Stomach (tissue), 19 donors: ENCODE measurements at regions of chr12 and their contacts with region 1.

Region 1: DNA sequence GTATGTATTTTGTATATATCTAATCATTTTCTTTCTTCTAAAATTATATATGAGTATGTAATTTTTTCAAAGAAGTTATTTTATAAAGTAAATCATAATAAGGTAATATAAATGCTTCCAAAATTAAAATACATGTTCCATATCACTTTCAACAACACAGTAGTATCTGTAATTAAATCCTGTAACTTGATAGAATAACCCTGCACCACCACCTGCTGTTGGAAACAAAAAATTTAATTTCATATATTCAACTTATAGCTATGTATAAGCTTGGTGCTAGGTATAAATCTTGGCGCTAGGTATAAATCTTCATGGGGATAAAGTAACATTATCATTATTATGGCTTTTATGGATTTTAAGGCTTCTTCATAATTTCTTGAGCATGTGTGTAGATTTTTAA is 149.7 kb upstream of the DCN start:
- DNase-seq: peak in 1 of 2 donors; percentile 57
- H3K4me3 ChIP-seq: no peak overlapping the region
- H3K27ac ChIP-seq: no peak overlapping the region
- H3K4me1 ChIP-seq: no peaks in the 10 kb centered on the region
- H3K27me3 ChIP-seq: no peaks in the 10 kb centered on the region
- CTCF ChIP-seq: no peak
- EP300 ChIP-seq: no peak
- POLR2A ChIP-seq: no peak

Region 2: DNA sequence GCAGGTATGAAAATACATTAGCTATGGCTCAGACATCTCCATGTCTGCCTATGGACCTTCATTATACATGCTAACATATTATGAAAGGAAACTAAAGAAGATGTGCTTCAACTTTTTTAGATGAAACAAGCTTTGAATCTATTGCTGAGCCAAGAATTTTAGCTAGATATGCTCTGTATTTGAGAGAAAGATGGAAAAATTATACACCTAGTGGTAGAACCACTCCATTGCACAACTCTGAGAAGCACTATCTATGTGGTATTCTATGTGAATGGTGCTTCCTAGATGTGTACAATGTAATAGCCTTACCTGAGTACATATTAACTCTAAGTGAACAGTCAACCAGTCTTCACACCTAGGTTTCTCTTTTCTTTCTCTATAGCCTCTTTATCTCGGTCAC is 344.8 kb before region 1 on chr12:
- intact Hi-C with region 1: loop called (anchors 10 kb)
- DNase-seq: no peak
- H3K4me3 ChIP-seq: no peak overlapping the region
- H3K27ac ChIP-seq: no peak overlapping the region
- H3K4me1 ChIP-seq: no peaks in the 10 kb centered on the region
- H3K27me3 ChIP-seq: no peaks in the 10 kb centered on the region
- CTCF ChIP-seq: no peak
- EP300 ChIP-seq: no peak
- POLR2A ChIP-seq: no peak

Region 3: GRCh38 chr12:91551927-91552326 is 219.6 kb after region 1 on chr12:
- intact Hi-C with region 1: no loop called
- DNase-seq: no peak
- H3K4me3 ChIP-seq: no peak overlapping the region
- H3K27ac ChIP-seq: no peak overlapping the region
- H3K4me1 ChIP-seq: no peaks in the 10 kb centered on the region
- H3K27me3 ChIP-seq: no peaks in the 10 kb centered on the region
- CTCF ChIP-seq: no peak
- EP300 ChIP-seq: no peak
- POLR2A ChIP-seq: no peak